Activated CD4-positive, alpha-beta T cell treated with anti-CD3 and anti-CD28 coated beads for 36 hours (primary cell): ENCODE measurements at regions of chr4 and their contacts with region 1.

Region 1: GRCh38 chr4:161252520-161253141 is 911.2 kb downstream of the FSTL5 start:
- DNase-seq: no peak
- ATAC-seq: no peak
- H3K4me3 Mint-ChIP-seq: no peak overlapping the region
- H3K27ac Mint-ChIP-seq: no peak overlapping the region
- H3K4me1 Mint-ChIP-seq: no peaks in the 10 kb centered on the region
- H3K27me3 Mint-ChIP-seq: no peaks in the 10 kb centered on the region

Region 2: DNA sequence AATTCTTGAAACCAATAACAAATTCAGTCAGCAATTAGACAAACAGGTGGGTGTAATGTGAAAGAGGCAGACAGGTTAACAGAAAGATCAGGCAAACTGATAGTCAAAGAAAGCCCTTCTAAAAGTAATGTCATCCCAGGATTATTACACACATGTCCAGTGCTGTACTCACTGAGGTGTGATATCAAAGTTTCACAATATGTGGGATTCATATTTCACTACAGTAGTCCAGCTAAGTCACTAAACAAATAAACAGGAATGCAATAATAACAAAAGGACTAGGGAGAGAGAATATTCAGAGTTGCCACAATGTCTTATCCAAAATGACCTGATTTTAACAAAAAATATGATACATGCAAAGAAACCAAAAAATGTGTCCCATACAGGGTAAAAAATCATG is 123.6 kb after region 1 on chr4:
- CTCF ChIA-PET with region 1: no interaction called
- POLR2A ChIA-PET with region 1: no interaction called
- intact Hi-C with region 1: no loop called
- DNase-seq: no peak
- ATAC-seq: no peak
- H3K4me3 Mint-ChIP-seq: no peak overlapping the region
- H3K27ac Mint-ChIP-seq: no peak overlapping the region
- H3K4me1 Mint-ChIP-seq: no peaks in the 10 kb centered on the region
- H3K27me3 Mint-ChIP-seq: no peaks in the 10 kb centered on the region

Region 3: DNA sequence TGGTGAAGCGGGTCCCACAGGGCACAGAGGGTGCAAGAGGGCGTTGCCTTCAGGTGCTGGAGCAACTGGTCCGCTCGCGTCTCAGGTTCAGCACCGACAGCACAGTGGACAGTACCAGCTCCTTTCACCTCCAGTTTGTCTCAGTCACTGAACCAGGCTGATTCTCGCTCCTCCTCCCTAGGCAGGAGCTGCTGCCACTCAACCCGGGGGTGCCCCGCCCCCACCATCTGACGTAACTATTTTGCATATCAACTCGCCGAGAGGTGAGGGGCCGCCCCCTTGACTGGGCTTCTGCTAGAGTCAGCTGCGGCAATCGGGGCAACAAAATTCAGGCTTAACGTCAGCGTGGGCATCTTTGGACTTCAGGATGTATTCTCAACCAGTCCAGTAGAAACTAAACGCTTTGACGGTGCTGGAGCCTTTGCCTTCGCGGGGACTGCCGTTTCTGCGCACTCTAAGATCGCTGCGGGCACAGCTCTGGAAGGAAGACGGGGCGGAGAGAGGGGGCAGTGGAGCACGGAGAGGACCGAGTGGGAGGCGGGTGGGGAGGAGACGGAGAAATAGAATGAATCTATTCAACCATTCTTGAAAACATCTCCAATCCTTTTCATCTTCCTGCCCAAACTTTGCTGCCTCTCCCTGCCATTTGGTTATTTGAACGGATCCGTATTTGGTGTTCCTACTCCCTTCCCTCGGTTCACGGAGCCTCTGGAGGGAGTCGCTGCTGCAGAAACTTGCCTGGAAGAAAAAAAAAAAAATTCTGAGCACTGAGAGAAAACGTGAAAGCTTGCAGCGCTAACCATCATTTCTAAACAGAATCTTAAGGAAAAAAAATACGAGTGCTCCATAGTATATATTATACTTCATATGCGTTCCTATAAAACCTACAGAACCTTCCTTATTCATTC is 911.5 kb after region 1 on chr4 and contains the start of gene FSTL5:
- CTCF ChIA-PET with region 1: no interaction called
- POLR2A ChIA-PET with region 1: no interaction called
- intact Hi-C with region 1: loop called in 1 of 2 experiments (anchors 10 kb)
- DNase-seq: peak; percentile 78
- ATAC-seq: peak; percentile 94
- H3K4me3 Mint-ChIP-seq: peak within 1 kb of the TSS; percentile 36
- H3K27ac Mint-ChIP-seq: no peak within 1 kb of the TSS
- H3K4me1 Mint-ChIP-seq: peaks cover 4% of the 10 kb centered on the region
- H3K27me3 Mint-ChIP-seq: peaks cover 2% of the 10 kb centered on the region
- total RNA-seq, gene FSTL5: not detected